MCF 10A (cell line): ENCODE measurements at regions of chr2 and their contacts with region 1.

Region 1: GRCh38 chr2:70616168-70616694 is 62.6 kb upstream of the TGFA start:
- DNase-seq: peak; percentile 94
- H3K4me3 Mint-ChIP-seq: no peak overlapping the region
- H3K27ac Mint-ChIP-seq: no peak overlapping the region
- H3K4me1 Mint-ChIP-seq: no peaks in the 10 kb centered on the region
- H3K27me3 Mint-ChIP-seq: peaks cover 8% of the 10 kb centered on the region
- CTCF ChIP-seq: no peak

Region 2: DNA sequence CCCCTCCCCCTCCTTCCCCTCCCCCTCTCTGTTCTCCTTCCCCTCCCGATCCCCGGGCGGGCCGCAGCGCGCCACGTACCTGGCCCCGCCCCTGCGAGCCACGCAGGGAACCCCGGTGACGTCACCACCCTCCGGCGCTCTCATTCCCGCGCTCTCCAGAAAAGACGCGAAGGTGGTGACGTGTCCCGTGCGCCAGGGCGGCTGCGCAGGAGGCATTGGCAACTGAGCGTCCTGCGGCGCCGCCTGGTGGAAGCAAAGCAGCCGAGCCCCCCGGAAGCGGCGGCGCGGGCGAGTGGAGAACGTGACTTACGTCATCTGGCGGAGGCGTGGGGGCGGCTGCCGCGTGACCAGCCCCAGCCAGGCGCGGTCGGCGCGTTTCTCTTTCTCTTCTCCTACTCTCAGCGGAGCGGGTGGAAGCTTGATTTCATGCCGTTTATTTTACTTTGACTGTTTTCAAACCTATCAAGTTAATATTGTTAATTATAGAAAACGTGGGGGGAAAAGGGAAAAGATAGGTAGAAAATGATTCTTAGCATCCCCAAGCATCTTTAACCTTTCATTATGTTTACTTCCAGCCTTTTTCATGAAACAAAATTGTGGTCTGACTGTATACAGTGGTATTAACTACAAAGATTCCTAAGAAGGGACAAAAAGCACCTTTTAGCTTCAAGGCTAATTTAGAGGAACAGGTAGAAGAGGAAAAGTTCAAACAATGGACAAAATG is 473.5 kb before region 1 on chr2:
- CTCF ChIA-PET with region 1: no interaction called
- POLR2A ChIA-PET with region 1: no interaction called
- intact Hi-C with region 1: no loop called
- DNase-seq: peak; percentile 99
- H3K4me3 Mint-ChIP-seq: peak overlapping the region; percentile 76
- H3K27ac Mint-ChIP-seq: peak overlapping the region; percentile 89
- H3K4me1 Mint-ChIP-seq: peaks cover 24% of the 10 kb centered on the region
- H3K27me3 Mint-ChIP-seq: no peaks in the 10 kb centered on the region
- CTCF ChIP-seq: peak; percentile 90

Region 3: GRCh38 chr2:70328921-70329561 is 287.2 kb before region 1 on chr2:
- CTCF ChIA-PET with region 1: interaction called, 10 read pairs
- POLR2A ChIA-PET with region 1: interaction called, 5 read pairs
- intact Hi-C with region 1: no loop called
- DNase-seq: peak; percentile 92
- H3K4me3 Mint-ChIP-seq: peak overlapping the region; percentile 14
- H3K27ac Mint-ChIP-seq: peak overlapping the region; percentile 89
- H3K4me1 Mint-ChIP-seq: peaks cover 13% of the 10 kb centered on the region
- H3K27me3 Mint-ChIP-seq: no peaks in the 10 kb centered on the region
- CTCF ChIP-seq: no peak

Region 4: GRCh38 chr2:70482401-70482800 is 133.8 kb before region 1 on chr2:
- CTCF ChIA-PET with region 1: interaction called, 3 read pairs
- POLR2A ChIA-PET with region 1: no interaction called
- intact Hi-C with region 1: loop called (anchors 2 kb)
- DNase-seq: no peak
- H3K4me3 Mint-ChIP-seq: no peak overlapping the region
- H3K27ac Mint-ChIP-seq: no peak overlapping the region
- H3K4me1 Mint-ChIP-seq: no peaks in the 10 kb centered on the region
- H3K27me3 Mint-ChIP-seq: no peaks in the 10 kb centered on the region
- CTCF ChIP-seq: no peak

Region 5: GRCh38 chr2:70523996-70524965 is 92.0 kb before region 1 on chr2:
- CTCF ChIA-PET with region 1: interaction called, 4 read pairs
- POLR2A ChIA-PET with region 1: interaction called, 11 read pairs
- intact Hi-C with region 1: no loop called
- DNase-seq: peak; percentile 95
- H3K4me3 Mint-ChIP-seq: peak overlapping the region; percentile 49
- H3K27ac Mint-ChIP-seq: peak overlapping the region; percentile 84
- H3K4me1 Mint-ChIP-seq: peaks cover 43% of the 10 kb centered on the region
- H3K27me3 Mint-ChIP-seq: no peaks in the 10 kb centered on the region
- CTCF ChIP-seq: no peak

Region 6: GRCh38 chr2:70553584-70554337 is 62.5 kb before region 1 on chr2 and contains the start of gene TGFA:
- CTCF ChIA-PET with region 1: interaction called, 90 read pairs
- POLR2A ChIA-PET with region 1: interaction called, 73 read pairs
- intact Hi-C with region 1: loop called (anchors 1 kb)
- DNase-seq: peak; percentile 89
- H3K4me3 Mint-ChIP-seq: peak within 1 kb of the TSS; percentile 93
- H3K27ac Mint-ChIP-seq: peak within 1 kb of the TSS; percentile 83
- H3K4me1 Mint-ChIP-seq: peaks cover 15% of the 10 kb centered on the region
- H3K27me3 Mint-ChIP-seq: no peaks in the 10 kb centered on the region
- CTCF ChIP-seq: peak; percentile 84
- total RNA-seq, gene TGFA: 17.9 and 22.5 TPM in 2 replicates

Region 7: GRCh38 chr2:70580352-70580751 is 35.9 kb before region 1 on chr2:
- CTCF ChIA-PET with region 1: interaction called, 10 read pairs
- POLR2A ChIA-PET with region 1: no interaction called
- intact Hi-C with region 1: no loop called
- DNase-seq: no peak
- H3K4me3 Mint-ChIP-seq: no peak overlapping the region
- H3K27ac Mint-ChIP-seq: no peak overlapping the region
- H3K4me1 Mint-ChIP-seq: no peaks in the 10 kb centered on the region
- H3K27me3 Mint-ChIP-seq: no peaks in the 10 kb centered on the region
- CTCF ChIP-seq: no peak

Region 8: GRCh38 chr2:70901227-70902066 is 285.2 kb after region 1 on chr2:
- CTCF ChIA-PET with region 1: no interaction called
- POLR2A ChIA-PET with region 1: no interaction called
- intact Hi-C with region 1: no loop called
- DNase-seq: no peak
- H3K4me3 Mint-ChIP-seq: peak overlapping the region; percentile 74
- H3K27ac Mint-ChIP-seq: no peak overlapping the region
- H3K4me1 Mint-ChIP-seq: peaks cover 6% of the 10 kb centered on the region
- H3K27me3 Mint-ChIP-seq: peaks cover 63% of the 10 kb centered on the region
- CTCF ChIP-seq: no peak